ENCODE measurements at regions of chr20 and their contacts with region 1.

Region 1: DNA sequence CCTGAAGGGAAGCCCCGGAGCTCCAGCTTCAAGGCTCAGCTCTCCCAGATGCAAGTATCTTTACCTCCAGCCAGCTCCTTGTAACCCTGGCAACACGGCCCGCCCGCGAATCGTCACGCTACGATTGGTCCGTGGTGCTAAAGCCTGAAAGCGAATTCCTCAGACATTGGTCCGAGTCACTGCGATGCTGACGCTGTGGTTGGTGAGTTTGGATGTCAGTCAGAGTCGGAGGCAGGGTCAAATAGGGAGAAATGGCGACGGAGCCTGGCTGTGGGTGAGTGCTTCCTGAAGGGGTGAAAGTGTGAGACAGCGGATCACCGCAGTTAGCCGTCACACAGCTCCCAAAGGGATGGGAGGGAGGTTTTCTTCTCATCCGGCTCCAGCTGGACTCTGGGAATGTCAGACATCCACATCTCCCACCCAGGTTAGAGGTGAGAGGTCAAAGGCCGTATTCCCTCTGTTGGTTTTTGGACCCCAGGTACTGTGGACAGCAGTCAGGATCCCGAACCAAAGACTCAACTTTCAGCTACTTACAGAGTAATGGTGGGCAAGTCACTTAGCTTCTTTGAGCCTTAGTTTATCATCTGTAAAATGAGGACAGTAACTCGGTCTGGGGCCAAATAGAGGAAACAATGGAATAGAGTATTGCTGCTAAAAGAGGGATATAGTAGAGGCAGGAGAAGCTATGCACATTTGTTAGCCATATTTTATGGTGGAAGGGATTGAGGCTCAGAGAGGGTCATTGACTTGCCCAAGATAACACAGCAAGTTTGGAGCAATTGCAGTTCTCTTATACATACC is at the start of gene ZSWIM1:
- DNase-seq: peak; percentile 88 to 99 (median 98)
- ATAC-seq: peak; percentile 99
- H3K4me3 ChIP-seq: peak within 1 kb of the TSS; percentile 75
- H3K4me3 Mint-ChIP-seq: peak within 1 kb of the TSS; percentile 83 to 95 (median 92)
- H3K27ac ChIP-seq: peak within 1 kb of the TSS; percentile 95
- H3K27ac Mint-ChIP-seq: peak within 1 kb of the TSS; percentile 91 to 95 (median 93)
- H3K4me1 ChIP-seq: peaks cover 9 to 18% of the 10 kb centered on the region in 2 donors
- H3K4me1 Mint-ChIP-seq: peaks cover 26 to 43% (median 38%) of the 10 kb centered on the region in 7 donors
- H3K27me3 ChIP-seq: no peaks in the 10 kb centered on the region
- H3K27me3 Mint-ChIP-seq: no peaks in the 10 kb centered on the region
- total RNA-seq, gene ZSWIM1: 8.2 to 16.0 (median 9.8) TPM

Region 2: GRCh38 chr20:45910670-45911485 is 29.7 kb after region 1 on chr20:
- CTCF ChIA-PET with region 1: no interaction called
- POLR2A ChIA-PET with region 1: no interaction called
- intact Hi-C with region 1: loop called in 1 of 2 experiments (anchors 1 kb)
- DNase-seq: peak; percentile 54 to 93 (median 67)
- ATAC-seq: peak; percentile 93
- H3K4me3 ChIP-seq: peak overlapping the region; percentile 76
- H3K4me3 Mint-ChIP-seq: peak overlapping the region; percentile 59 to 84 (median 80)
- H3K27ac ChIP-seq: peak overlapping the region; percentile 2
- H3K27ac Mint-ChIP-seq: peak overlapping the region in 5 of 9 donors; percentile 25 to 67 (median 46)
- H3K4me1 ChIP-seq: peaks cover 13 to 17% of the 10 kb centered on the region in 2 donors
- H3K4me1 Mint-ChIP-seq: peaks cover 0 to 21% (median 16%) of the 10 kb centered on the region in 7 donors
- H3K27me3 ChIP-seq: no peaks in the 10 kb centered on the region
- H3K27me3 Mint-ChIP-seq: peaks cover 6 to 18% (median 10%) of the 10 kb centered on the region in 5 donors

Measured in naive thymus-derived CD4-positive, alpha-beta T cell (primary cell).